ENCODE measurements at regions of chr4 and their contacts with region 1.

Region 1: DNA sequence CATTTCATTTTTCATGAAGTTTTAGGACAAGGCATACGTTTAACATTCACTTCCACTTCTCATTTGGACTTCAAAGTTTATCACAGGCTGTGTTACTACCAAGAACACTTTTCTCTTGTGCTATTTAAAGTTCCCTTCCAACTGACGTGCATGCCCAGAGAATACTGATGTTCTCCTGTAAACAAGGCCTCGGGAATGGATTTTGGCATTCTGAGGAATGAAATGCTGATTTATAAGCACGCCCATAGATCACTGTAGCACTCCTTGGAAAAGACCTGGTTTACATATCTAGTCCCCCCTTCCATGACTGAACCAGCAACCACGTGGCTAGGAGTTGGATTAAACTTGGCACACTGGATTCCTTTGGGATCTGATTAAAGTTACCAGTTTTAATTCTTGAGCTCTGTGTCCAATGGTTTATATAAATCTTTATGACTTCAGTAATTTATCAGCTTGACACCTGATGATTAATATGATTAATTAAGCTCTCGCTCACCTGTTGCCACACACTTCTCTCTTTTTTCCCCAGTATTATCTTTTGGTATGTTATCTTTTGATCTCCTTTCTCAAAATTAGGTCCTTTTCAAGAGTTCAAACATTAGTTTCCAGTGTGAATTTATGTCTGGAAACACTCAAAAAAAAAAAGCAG is 122.4 kb upstream of the HAND2 start:
- DNase-seq: peak; percentile 69
- H3K4me3 ChIP-seq: no peak overlapping the region
- H3K27ac ChIP-seq: peak overlapping the region; percentile 38 to 75 (median 59)
- H3K4me1 ChIP-seq: peaks cover 0 to 21% (median 7%) of the 10 kb centered on the region in 4 donors
- H3K27me3 ChIP-seq: no peaks in the 10 kb centered on the region
- CTCF ChIP-seq: no peak
- EP300 ChIP-seq: peak; percentile 38 to 81 (median 66)
- POLR2A ChIP-seq: no peak

Region 2: DNA sequence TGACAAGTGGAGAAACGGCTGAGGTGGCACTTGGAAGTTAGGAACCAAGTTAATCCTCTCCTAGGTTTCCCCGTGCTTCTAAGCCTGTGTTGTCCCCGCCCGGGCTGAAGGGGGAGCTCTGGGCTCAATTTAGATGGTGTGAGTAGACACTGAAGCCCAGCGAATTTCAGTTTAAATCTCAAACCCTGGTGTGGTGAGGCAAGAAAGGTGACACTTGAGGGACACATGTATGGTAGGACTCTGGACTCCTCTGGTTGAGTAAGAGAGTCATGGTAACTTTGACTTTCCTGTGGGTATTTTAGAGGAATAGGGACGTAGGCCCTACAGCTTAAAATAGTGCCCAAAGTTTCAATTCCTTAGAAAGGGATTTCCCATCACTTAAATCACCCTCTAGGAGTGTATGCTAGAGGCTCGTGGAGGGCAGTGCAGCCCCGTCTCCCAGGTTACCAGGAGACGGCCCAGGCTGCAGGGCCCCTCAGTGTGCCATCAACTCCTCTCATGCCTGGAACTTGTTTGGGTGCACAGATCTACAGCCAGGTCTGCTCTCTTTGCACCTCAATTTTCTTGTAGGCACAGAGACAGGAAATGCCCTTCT is 146.4 kb before region 1 on chr4:
- intact Hi-C with region 1: loop called (anchors 5 kb)
- DNase-seq: peak; percentile 90
- H3K4me3 ChIP-seq: peak overlapping the region in 2 of 4 donors; percentile 58 to 70
- H3K27ac ChIP-seq: peak overlapping the region; percentile 14 to 99 (median 92)
- H3K4me1 ChIP-seq: peaks cover 0 to 56% (median 41%) of the 10 kb centered on the region in 4 donors
- H3K27me3 ChIP-seq: no peaks in the 10 kb centered on the region
- CTCF ChIP-seq: peak; percentile 69 to 71 (median 70)
- EP300 ChIP-seq: no peak
- POLR2A ChIP-seq: no peak

Region 3: GRCh38 chr4:173573286-173573685 is 79.1 kb before region 1 on chr4:
- intact Hi-C with region 1: loop called (anchors 5 kb)
- DNase-seq: peak; percentile 77
- H3K4me3 ChIP-seq: no peak overlapping the region
- H3K27ac ChIP-seq: peak overlapping the region; percentile 54 to 74 (median 64)
- H3K4me1 ChIP-seq: peaks cover 0 to 67% (median 47%) of the 10 kb centered on the region in 4 donors
- H3K27me3 ChIP-seq: no peaks in the 10 kb centered on the region
- CTCF ChIP-seq: no peak
- EP300 ChIP-seq: peak in 1 of 4 donors; percentile 35
- POLR2A ChIP-seq: no peak

Region 4: DNA sequence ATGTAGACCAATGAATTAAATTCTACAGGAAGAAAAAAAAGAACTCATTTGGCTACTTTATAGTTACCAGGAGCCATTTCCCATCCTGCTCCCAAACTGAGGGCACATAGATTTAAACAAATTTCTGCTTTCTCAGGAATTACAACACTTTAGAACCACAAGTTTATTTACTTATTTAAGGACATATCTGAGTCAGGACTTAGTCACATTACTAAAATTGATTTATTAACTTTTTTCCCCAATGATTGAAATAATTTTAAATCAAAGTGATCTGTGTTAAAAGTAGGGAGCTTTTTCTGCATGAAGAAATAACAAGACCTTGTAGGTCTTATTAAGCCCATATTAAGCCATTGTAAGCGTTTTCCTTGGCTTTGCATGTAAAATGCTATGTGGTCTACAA is 168.6 kb after region 1 on chr4:
- intact Hi-C with region 1: no loop called
- DNase-seq: no peak
- H3K4me3 ChIP-seq: no peak overlapping the region
- H3K27ac ChIP-seq: no peak overlapping the region
- H3K4me1 ChIP-seq: no peaks in the 10 kb centered on the region
- H3K27me3 ChIP-seq: no peaks in the 10 kb centered on the region
- CTCF ChIP-seq: no peak
- EP300 ChIP-seq: no peak
- POLR2A ChIP-seq: no peak

Region 5: DNA sequence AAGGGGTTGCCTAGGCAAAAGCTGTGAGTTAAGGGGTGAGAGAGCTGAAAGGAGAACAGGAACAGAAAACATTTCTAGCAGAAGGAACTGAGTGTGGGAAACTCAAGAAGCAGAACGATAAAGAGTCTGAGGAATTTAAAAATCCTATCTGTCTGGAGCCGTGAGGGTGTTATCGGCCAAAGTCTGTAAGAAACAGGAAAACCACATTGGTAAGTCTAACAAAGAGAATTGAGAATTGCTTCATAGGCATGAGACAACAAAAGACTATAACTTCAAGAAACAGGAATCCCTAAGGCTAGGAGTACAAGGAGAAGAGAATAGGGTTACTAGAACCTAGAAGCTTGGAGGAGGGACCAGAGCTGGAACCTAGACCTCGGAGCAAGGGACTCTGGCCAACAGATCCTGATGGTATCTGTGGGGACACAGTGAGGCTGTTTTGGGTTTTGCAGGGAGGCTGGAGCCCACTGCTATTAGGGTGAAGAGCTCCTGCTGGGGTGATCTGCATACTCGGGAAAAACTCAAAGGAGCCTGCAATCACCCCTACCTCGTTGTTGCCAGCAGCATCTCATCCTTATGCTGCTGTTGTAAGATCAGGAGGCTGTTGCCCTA is 455.4 kb after region 1 on chr4:
- intact Hi-C with region 1: loop called (anchors 5 kb)
- DNase-seq: no peak
- H3K4me3 ChIP-seq: no peak overlapping the region
- H3K27ac ChIP-seq: peak overlapping the region in 3 of 4 donors; percentile 71 to 80 (median 75)
- H3K4me1 ChIP-seq: peaks cover 0 to 68% (median 52%) of the 10 kb centered on the region in 4 donors
- H3K27me3 ChIP-seq: no peaks in the 10 kb centered on the region
- CTCF ChIP-seq: no peak
- EP300 ChIP-seq: no peak
- POLR2A ChIP-seq: no peak

Region 6: GRCh38 chr4:174318829-174319764 is 666.7 kb after region 1 on chr4:
- intact Hi-C with region 1: loop called (anchors 5 kb)
- DNase-seq: no peak
- H3K4me3 ChIP-seq: no peak overlapping the region
- H3K27ac ChIP-seq: peak overlapping the region in 1 of 4 donors; percentile 17
- H3K4me1 ChIP-seq: peaks cover 0 to 25% (median 0%) of the 10 kb centered on the region in 4 donors
- H3K27me3 ChIP-seq: no peaks in the 10 kb centered on the region
- CTCF ChIP-seq: peak in 3 of 4 experiments; percentile 59 to 79 (median 70)
- EP300 ChIP-seq: no peak
- POLR2A ChIP-seq: no peak

Measured in sigmoid colon (tissue), 7 donors.